Calu3 (cell line): ENCODE measurements at regions of chr6 and their contacts with region 1.

Region 1: GRCh38 chr6:31352683-31353383 is 4.1 kb downstream of the HLA-B start:
- DNase-seq: no peak
- H3K4me3 Mint-ChIP-seq: no peak overlapping the region
- H3K27ac Mint-ChIP-seq: no peak overlapping the region
- H3K4me1 Mint-ChIP-seq: no peaks in the 10 kb centered on the region
- H3K27me3 Mint-ChIP-seq: peaks cover 66% of the 10 kb centered on the region
- CTCF ChIP-seq: no peak

Region 2: DNA sequence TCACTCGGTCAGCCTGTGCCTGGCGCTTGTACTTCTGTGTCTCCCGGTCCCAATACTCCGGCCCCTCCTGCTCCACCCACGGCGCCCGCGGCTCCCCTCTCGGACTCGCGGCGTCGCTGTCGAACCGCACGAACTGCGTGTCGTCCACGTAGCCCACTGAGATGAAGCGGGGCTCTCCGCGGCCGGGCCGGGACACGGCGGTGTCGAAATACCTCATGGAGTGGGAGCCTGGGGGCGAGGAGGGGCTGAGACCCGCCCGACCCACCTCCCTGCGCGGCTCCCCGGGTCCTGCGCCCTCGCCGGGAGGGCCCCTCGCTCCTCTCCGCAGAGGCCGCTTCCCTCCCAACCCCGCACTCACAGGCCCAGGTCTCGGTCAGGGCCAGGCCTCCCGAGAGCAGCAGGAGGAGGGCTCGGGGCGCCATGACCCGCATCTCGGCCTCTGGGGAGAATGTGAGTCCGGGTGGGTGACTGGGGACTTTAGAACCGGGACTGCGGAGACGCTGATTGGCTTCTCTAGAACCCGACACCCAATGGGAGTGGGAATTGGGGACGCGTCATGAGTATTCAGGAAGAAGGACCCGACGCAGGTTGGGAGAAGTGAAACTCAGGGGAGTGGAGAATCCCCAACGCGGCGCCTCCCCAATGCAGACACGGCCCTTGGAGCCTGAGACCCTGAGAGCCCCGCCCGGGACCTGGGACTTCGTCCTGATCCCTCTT is 81.0 kb before region 1 on chr6 and contains the start of gene HLA-C:
- CTCF ChIA-PET with region 1: interaction called, 3 read pairs
- intact Hi-C with region 1: loop called (anchors 1 kb)
- DNase-seq: peak; percentile 97
- H3K4me3 Mint-ChIP-seq: peak within 1 kb of the TSS; percentile 82
- H3K27ac Mint-ChIP-seq: peak within 1 kb of the TSS; percentile 94
- H3K4me1 Mint-ChIP-seq: peaks cover 17% of the 10 kb centered on the region
- H3K27me3 Mint-ChIP-seq: peaks cover 42% of the 10 kb centered on the region
- CTCF ChIP-seq: no peak
- total RNA-seq, gene HLA-C: 652 and 1,216 TPM in 2 replicates